HEK293 (cell line): ENCODE measurements at regions of chr1 and their contacts with region 1.

Region 1: GRCh38 chr1:231866392-231867331 is 240.1 kb downstream of the DISC1 start:
- H3K4me3 ChIP-seq: no peak overlapping the region
- H3K27ac ChIP-seq: no peak overlapping the region
- H3K4me1 ChIP-seq: no peaks in the 10 kb centered on the region; the same call in 1 of the 2 replicates
- CTCF ChIP-seq: peak; percentile 85

Region 2: DNA sequence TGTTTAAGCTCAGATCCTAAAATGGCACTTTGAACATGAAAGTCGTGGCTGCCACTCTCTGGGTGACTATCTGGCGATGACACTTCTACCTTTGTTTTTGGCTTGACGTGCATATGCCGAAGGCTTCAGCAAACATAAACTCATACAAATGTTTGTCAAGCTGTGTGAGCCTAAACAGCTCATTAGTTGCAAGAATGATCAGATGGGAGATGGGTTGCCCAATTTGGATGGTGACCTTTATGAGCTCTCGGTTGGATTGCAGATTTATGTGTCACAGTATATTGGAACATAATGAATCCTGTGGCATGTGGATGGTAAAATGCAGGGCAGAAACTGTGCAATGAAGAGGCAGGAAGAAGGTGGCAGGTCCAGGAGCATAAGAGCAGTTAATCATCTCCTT is 10.7 kb before region 1 on chr1:
- CTCF ChIA-PET with region 1: interaction called, 15 read pairs
- POLR2A ChIA-PET with region 1: no interaction called
- H3K4me3 ChIP-seq: no peak overlapping the region
- H3K27ac ChIP-seq: no peak overlapping the region
- H3K4me1 ChIP-seq: no peaks in the 10 kb centered on the region
- CTCF ChIP-seq: no peak

Region 3: GRCh38 chr1:231882790-231883189 is 16.1 kb after region 1 on chr1:
- CTCF ChIA-PET with region 1: interaction called, 35 read pairs
- POLR2A ChIA-PET with region 1: no interaction called
- H3K4me3 ChIP-seq: no peak overlapping the region
- H3K27ac ChIP-seq: no peak overlapping the region
- H3K4me1 ChIP-seq: peaks cover 10% of the 10 kb centered on the region
- CTCF ChIP-seq: no peak

Region 4: DNA sequence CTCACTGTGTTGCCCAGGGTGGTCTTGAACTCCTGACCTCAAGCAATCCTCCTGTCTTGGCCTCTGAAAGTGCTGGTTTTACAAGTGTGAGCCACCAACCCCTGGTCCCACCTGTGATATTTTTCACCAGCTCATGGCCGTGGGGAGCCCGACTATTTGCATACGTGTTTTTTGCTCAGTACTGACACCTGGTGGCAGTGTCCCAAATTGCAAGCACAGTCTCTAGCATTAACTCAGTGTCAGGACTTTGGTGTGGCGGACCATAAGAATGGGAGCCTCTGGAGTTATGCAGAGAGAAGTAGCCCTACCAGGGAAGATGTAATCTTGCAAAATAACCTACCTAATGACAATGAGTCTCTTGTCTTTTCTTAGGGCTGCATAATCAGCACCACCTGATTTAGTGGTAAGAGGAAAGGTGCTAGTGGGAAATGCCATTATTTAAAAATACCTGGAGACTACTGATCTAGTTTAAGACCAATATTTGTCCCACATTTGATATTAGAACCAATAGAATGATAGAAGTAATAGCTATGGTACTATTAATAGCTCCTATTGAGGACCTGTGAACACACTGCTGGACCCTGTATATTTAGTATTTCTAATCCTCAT is 65.3 kb after region 1 on chr1:
- CTCF ChIA-PET with region 1: interaction called, 12 read pairs
- POLR2A ChIA-PET with region 1: no interaction called
- H3K4me3 ChIP-seq: no peak overlapping the region
- H3K27ac ChIP-seq: no peak overlapping the region
- H3K4me1 ChIP-seq: peaks cover 40% of the 10 kb centered on the region
- CTCF ChIP-seq: peak; percentile 75

Region 5: DNA sequence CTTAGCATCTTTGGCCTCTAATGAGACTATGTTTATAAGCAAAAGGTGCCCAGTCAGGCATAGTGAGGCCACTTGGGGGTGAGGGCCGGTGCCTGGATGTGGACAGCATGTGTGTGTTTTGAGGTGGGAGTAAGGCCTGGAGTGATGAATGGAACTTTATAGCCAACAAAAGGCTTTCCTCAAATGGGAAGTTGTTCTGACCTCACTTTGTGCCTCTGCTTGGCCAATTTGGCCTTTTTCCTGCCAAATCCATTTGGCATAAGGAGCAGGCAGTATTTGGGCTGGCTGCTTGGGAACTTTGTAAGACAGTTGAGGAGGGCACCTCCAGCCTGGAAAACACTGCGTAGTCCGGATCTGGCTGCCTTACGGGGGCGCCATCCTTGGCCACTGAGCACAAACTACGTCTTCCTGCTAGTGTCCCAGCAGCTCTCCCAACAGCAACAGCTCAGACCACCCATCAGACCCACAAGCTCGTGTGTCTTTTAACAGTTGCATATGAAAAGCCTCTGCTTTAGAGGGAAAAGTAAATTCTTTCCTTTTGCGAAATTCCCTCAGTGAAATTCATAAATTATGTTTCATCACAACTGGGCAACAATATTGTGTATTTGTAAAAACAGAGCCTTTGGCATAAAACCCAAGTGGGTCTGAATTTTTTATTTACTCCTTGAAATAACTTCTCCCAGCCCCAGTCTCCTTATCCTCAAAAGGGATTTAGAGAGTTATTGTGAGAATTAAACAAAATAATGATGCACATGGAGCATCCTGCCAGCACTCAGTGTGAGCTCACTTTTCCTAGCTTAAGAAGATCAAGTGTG is 82.8 kb after region 1 on chr1:
- CTCF ChIA-PET with region 1: no interaction called
- POLR2A ChIA-PET with region 1: no interaction called
- H3K4me3 ChIP-seq: no peak overlapping the region
- H3K27ac ChIP-seq: no peak overlapping the region
- H3K4me1 ChIP-seq: peaks cover 10% of the 10 kb centered on the region; the same call in 1 of the 2 replicates
- CTCF ChIP-seq: no peak

Region 6: GRCh38 chr1:231983588-231984193 is 117.0 kb after region 1 on chr1:
- CTCF ChIA-PET with region 1: interaction called, 10 read pairs
- POLR2A ChIA-PET with region 1: no interaction called
- H3K4me3 ChIP-seq: no peak overlapping the region
- H3K27ac ChIP-seq: no peak overlapping the region
- H3K4me1 ChIP-seq: peaks cover 24% of the 10 kb centered on the region
- CTCF ChIP-seq: no peak